ENCODE measurements at regions of chr7 and their contacts with region 1.

Region 1: GRCh38 chr7:44824894-44825526 is 22.9 kb downstream of the H2AZ2 start:
- DNase-seq: no peak
- H3K4me3 ChIP-seq: no peak overlapping the region
- H3K27ac ChIP-seq: no peak overlapping the region
- H3K4me1 ChIP-seq: no peaks in the 10 kb centered on the region
- H3K27me3 ChIP-seq: no peaks in the 10 kb centered on the region
- CTCF ChIP-seq: no peak
- EP300 ChIP-seq: no peak
- POLR2A ChIP-seq: 0 out of 3 replicates have a peak, but pooled peaks of 1 of the 2 experiments have one; percentile 15
- RAD21 ChIP-seq: no peak

Region 2: DNA sequence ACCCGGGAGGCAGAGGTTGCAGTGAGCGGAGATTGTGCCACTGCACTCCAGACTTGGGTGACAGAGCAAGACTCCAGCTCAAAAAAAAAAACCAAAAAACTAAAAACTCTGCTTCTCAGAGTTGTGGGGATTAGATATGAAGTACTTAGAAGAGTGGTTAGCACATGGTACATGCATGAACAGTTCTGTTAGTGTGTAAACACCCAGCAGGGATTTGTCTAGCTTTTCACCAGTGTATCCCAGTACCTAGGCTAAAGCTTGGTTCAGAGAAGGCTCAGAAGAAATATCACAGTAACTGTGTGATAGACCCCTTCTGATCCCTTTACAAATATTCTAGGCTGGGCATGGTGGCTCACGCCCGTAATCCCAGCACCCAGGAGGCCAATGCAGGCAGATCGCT is 19.1 kb before region 1 on chr7:
- CTCF ChIA-PET with region 1: interaction called, 6 read pairs
- POLR2A ChIA-PET with region 1: interaction called, 24 read pairs
- DNase-seq: no peak
- H3K4me3 ChIP-seq: no peak overlapping the region
- H3K27ac ChIP-seq: no peak overlapping the region
- H3K4me1 ChIP-seq: no peaks in the 10 kb centered on the region
- H3K27me3 ChIP-seq: no peaks in the 10 kb centered on the region
- CTCF ChIP-seq: no peak
- EP300 ChIP-seq: no peak
- POLR2A ChIP-seq: no peak
- RAD21 ChIP-seq: no peak

Region 3: GRCh38 chr7:44838751-44839150 is 13.7 kb after region 1 on chr7:
- CTCF ChIA-PET with region 1: interaction called, 4 read pairs
- POLR2A ChIA-PET with region 1: interaction called, 28 read pairs
- DNase-seq: no peak
- H3K4me3 ChIP-seq: no peak overlapping the region
- H3K27ac ChIP-seq: no peak overlapping the region
- H3K4me1 ChIP-seq: no peaks in the 10 kb centered on the region
- H3K27me3 ChIP-seq: no peaks in the 10 kb centered on the region
- CTCF ChIP-seq: no peak
- EP300 ChIP-seq: no peak
- POLR2A ChIP-seq: no peak
- RAD21 ChIP-seq: no peak

Measured in H1 (cell line).